ENCODE measurements at regions of chr15 and their contacts with region 1.

Region 1: DNA sequence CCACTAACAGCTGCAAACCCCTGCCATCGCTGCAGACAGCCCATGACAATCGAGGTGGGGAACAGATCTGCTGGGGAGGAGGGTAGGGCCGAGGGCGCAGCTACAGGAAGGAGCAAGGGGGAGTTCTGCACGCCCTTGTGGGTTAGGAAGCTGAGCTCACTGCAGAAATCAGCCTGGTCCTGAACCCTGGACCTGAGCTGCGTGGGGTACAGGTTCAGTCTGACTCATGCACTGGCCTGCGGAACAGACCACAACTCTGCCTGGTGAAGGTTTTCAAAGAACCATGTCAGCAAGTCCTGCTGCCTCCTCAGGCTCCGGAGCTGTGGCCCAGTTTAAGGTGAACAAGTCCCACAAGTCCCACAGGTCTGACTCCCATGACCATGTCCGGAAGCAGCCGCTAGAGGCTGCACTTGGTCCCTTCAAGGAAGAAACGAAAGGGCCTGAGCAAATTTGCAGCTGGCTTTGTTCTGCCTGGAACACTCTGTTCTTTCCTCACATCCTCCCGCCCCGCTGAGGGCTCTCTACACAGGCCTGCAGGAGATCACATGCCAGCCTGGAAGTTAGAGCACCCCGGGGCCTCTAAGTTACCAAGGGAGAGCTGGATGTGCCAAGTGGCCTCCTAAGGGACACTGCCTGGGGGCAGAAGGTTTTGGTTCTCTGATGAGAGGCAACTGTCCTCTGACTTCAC is 49.4 kb upstream of the AKAP13 start:
- DNase-seq: peak; percentile 77
- H3K4me3 ChIP-seq: no peak overlapping the region
- H3K27ac ChIP-seq: no peak overlapping the region
- H3K4me1 ChIP-seq: peaks cover 12% of the 10 kb centered on the region
- H3K27me3 ChIP-seq: no peaks in the 10 kb centered on the region
- CTCF ChIP-seq: peak; percentile 58

Region 2: GRCh38 chr15:85367741-85368140 is 36.7 kb after region 1 on chr15:
- CTCF ChIA-PET with region 1: no interaction called
- POLR2A ChIA-PET with region 1: no interaction called
- intact Hi-C with region 1: no loop called
- DNase-seq: no peak
- H3K4me3 ChIP-seq: no peak overlapping the region
- H3K27ac ChIP-seq: no peak overlapping the region
- H3K4me1 ChIP-seq: no peaks in the 10 kb centered on the region
- H3K27me3 ChIP-seq: no peaks in the 10 kb centered on the region
- CTCF ChIP-seq: no peak

Region 3: DNA sequence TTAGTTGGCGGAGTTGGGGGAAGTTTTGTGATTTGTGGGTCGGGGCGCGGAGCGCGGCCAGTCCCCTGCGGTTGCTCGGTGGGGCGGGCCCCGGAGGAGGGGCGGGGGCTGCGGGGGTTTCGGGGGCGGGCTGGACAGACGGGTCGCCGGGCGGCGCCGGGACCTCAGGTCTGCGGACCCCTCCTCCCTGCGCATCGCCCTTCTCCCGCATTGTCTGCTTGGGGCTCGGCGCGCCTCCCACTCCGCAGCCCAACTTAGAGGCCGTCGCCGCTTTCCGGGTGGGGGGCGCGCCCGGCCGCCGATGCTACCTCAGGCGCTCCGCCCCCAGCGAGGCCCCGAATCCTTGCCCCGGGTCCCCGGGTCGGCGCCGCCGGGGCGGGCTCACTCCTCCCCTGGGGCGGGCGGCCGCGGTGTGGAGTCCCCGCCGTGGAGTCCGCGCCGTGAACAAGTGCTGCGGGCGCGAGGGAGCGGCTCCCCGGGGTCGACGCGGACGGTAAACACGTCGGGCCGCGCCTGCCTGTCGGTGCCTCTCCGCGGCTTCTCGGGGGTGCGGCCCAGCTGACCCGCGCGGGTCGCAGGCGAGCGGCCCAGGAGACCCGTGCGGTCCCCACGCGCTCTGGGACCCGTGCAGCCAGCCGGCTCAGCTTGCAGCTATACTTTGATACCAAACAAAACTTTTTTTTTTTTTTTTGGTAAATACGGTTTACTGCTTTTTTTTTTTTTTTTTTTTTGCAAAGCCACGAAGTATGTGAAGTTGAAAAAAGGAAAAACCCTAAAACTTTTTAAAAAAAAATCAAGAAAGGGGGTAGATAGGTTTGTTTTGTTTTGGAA is 50.0 kb after region 1 on chr15:
- CTCF ChIA-PET with region 1: interaction called, 13 read pairs
- POLR2A ChIA-PET with region 1: no interaction called
- intact Hi-C with region 1: no loop called
- DNase-seq: peak; percentile 45
- H3K4me3 ChIP-seq: peak overlapping the region; percentile 91
- H3K27ac ChIP-seq: peak overlapping the region; percentile 72
- H3K4me1 ChIP-seq: no peaks in the 10 kb centered on the region
- H3K27me3 ChIP-seq: no peaks in the 10 kb centered on the region
- CTCF ChIP-seq: no peak

Region 4: GRCh38 chr15:85402195-85402881 is 71.3 kb after region 1 on chr15:
- CTCF ChIA-PET with region 1: no interaction called
- POLR2A ChIA-PET with region 1: no interaction called
- intact Hi-C with region 1: no loop called
- DNase-seq: no peak
- H3K4me3 ChIP-seq: no peak overlapping the region
- H3K27ac ChIP-seq: peak overlapping the region; percentile 17
- H3K4me1 ChIP-seq: peaks cover 41% of the 10 kb centered on the region
- H3K27me3 ChIP-seq: no peaks in the 10 kb centered on the region
- CTCF ChIP-seq: no peak